ENCODE measurements at regions of chr1 and their contacts with region 1.

Region 1: GRCh38 chr1:244757091-244757939 is 78.1 kb upstream of the COX20 start:
- DNase-seq: no peak
- H3K4me3 Mint-ChIP-seq: no peak overlapping the region
- H3K27ac Mint-ChIP-seq: no peak overlapping the region
- H3K4me1 Mint-ChIP-seq: no peaks in the 10 kb centered on the region
- H3K27me3 Mint-ChIP-seq: no peaks in the 10 kb centered on the region
- CTCF ChIP-seq: no peak

Region 2: DNA sequence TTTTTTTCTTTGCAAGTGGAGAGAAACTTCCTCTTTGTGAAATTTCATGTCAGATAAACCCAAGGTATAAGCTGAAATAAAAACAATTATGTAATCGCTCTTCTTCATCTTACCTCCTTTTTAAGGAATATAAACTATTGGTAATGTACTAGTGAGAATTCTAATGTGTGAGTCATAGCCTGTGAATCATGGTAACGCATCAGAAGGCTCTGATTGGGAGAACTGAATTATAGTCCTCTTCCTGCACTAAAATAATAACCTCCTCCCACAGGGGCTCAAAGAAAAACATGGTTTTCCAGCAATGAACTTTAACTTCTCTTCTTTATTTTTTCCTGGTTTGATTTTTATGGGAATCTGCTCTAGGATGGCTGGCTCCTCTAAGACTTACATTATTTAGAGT is 21.0 kb after region 1 on chr1:
- CTCF ChIA-PET with region 1: interaction called, 10 read pairs
- POLR2A ChIA-PET with region 1: interaction called, 4 read pairs
- intact Hi-C with region 1: no loop called
- DNase-seq: peak; percentile 92
- H3K4me3 Mint-ChIP-seq: no peak overlapping the region
- H3K27ac Mint-ChIP-seq: no peak overlapping the region
- H3K4me1 Mint-ChIP-seq: peaks cover 9% of the 10 kb centered on the region
- H3K27me3 Mint-ChIP-seq: no peaks in the 10 kb centered on the region
- CTCF ChIP-seq: no peak

Region 3: GRCh38 chr1:245099401-245099800 is 342.1 kb after region 1 on chr1:
- CTCF ChIA-PET with region 1: no interaction called
- POLR2A ChIA-PET with region 1: no interaction called
- intact Hi-C with region 1: no loop called
- DNase-seq: no peak
- H3K4me3 Mint-ChIP-seq: no peak overlapping the region
- H3K27ac Mint-ChIP-seq: no peak overlapping the region
- H3K4me1 Mint-ChIP-seq: no peaks in the 10 kb centered on the region
- H3K27me3 Mint-ChIP-seq: no peaks in the 10 kb centered on the region
- CTCF ChIP-seq: no peak